Heart left ventricle (tissue), 16 donors: ENCODE measurements at regions of chr19 and their contacts with region 1.

Region 1: DNA sequence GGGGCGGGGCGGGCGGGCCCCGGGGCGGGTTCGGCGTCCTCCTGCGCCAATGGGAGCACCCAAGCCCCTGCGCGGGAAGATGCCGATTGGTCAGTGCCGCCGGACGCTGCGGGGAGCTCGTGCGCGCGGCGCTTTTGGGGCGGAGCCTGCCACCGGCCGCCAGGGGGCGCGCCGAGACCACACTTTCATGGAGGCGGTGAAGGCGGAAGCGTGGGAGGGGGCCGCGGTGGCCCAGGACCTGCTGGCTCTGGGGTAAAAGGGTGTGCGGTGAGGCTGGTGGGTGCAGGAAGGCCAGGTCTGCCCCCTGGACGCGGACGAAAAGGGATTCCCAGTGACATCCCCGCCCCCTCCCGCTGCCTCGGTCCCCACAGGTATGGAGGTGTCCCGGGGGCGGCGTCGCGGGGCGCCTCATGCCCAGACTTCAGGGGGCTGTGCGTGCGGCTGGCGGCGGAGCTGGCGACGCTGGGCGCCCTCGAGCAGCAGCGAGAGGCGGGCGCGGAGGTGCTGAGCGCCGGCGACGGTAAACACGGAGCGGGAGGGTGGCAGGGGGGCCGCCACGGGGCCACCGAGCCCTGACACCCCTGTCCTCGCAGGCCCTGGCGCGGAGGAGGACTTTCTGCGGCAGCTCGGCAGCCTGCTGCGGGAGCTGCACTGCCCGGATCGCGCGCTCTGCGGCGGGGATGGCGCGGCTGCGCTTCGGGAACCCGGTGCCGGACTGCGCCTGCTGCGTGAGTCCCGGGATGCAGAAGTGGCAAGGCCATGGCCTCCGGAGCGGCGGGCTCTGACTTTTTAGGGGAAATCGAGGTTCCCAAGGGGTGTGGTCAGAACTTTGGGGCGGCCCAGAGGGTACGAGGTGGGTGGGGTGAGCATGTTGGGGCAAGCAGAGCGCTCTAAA is at the start of gene FAM98C:
- DNase-seq: peak; percentile 95 to 99 (median 96)
- ATAC-seq: peak; percentile 99 to 100 (median 99)
- H3K4me3 ChIP-seq: peak within 1 kb of the TSS; percentile 70 to 98 (median 90)
- H3K27ac ChIP-seq: peak within 1 kb of the TSS; percentile 52 to 90 (median 79)
- H3K4me1 ChIP-seq: peaks cover 0 to 12% (median 7%) of the 10 kb centered on the region in 12 donors
- H3K27me3 ChIP-seq: peaks cover 5 to 38% (median 20%) of the 10 kb centered on the region in 9 donors
- CTCF ChIP-seq: peak; percentile 94 to 100 (median 99)
- POLR2A ChIP-seq: peak in 1 of 2 donors; percentile 27
- total RNA-seq, gene FAM98C: 9.3 to 15.8 (median 11.9) TPM

Region 2: GRCh38 chr19:38387550-38388348 is 15.5 kb before region 1 on chr19 and contains the start of gene GGN:
- intact Hi-C with region 1: no loop called
- DNase-seq: peak; percentile 73 to 86 (median 75)
- ATAC-seq: peak; percentile 56 to 76 (median 68)
- H3K4me3 ChIP-seq: peak within 1 kb of the TSS; percentile 16 to 69 (median 53)
- H3K27ac ChIP-seq: peak within 1 kb of the TSS in 6 of 12 donors; percentile 30 to 80 (median 47)
- H3K4me1 ChIP-seq: peaks cover 0 to 42% (median 25%) of the 10 kb centered on the region in 12 donors
- H3K27me3 ChIP-seq: peaks cover 0 to 36% (median 0%) of the 10 kb centered on the region in 9 donors
- CTCF ChIP-seq: no peak
- POLR2A ChIP-seq: no peak
- total RNA-seq, gene GGN: 0.18 to 0.67 (median 0.31) TPM in 5 of 9 donors, not detected in the others

Region 3: DNA sequence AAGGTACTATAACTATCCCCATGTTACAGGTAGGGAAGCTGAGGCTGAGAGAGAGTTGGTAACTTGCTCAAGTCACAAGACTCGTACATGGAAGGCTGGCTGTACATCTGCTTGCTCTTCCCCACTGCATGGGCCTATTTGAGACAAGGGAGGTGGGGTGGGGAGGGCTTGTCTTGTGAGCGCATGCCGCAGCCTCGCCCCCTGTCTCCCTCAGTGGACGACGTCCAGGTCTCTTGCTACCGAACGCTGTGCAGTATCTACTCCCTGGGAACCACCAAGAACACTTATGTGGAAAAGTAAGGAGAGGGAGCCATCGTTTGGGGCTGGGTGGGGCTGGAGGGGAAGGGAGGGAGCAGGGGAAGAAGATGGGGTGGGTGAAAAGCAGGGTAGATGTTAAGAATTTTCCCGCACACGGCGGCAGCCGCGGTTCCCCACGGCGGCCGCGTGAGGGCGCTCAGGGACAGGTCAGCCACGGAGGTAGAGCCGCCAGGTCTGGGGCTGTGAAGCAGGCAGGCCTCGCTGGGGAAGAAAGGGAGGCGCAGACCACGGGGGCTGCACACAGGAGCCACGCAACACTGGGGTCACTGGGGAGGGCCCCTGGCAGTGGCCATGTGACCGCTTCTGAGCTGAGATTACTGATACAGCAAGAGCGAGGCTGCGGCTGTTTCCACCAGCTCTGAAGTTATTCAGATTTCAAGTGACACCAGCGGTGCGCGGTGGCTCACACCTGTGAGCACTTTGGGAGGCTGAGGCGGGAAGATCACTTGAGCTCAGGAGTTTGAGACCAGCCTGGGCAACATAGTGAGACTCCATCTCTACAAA is 111.8 kb after region 1 on chr19:
- intact Hi-C with region 1: loop called in 3 of 10 experiments (anchors 2 to 10 kb)
- DNase-seq: peak; percentile 30 to 81 (median 58)
- ATAC-seq: peak in 3 of 4 donors; percentile 69 to 82 (median 70)
- H3K4me3 ChIP-seq: no peak overlapping the region
- H3K27ac ChIP-seq: no peak overlapping the region
- H3K4me1 ChIP-seq: peaks cover 0 to 7% (median 1%) of the 10 kb centered on the region in 12 donors
- H3K27me3 ChIP-seq: peaks cover 0 to 9% (median 0%) of the 10 kb centered on the region in 9 donors
- CTCF ChIP-seq: peak; percentile 76 to 88 (median 82)
- POLR2A ChIP-seq: no peak